K562 (cell line): ENCODE measurements at regions of chr5 and their contacts with region 1.

Region 1: DNA sequence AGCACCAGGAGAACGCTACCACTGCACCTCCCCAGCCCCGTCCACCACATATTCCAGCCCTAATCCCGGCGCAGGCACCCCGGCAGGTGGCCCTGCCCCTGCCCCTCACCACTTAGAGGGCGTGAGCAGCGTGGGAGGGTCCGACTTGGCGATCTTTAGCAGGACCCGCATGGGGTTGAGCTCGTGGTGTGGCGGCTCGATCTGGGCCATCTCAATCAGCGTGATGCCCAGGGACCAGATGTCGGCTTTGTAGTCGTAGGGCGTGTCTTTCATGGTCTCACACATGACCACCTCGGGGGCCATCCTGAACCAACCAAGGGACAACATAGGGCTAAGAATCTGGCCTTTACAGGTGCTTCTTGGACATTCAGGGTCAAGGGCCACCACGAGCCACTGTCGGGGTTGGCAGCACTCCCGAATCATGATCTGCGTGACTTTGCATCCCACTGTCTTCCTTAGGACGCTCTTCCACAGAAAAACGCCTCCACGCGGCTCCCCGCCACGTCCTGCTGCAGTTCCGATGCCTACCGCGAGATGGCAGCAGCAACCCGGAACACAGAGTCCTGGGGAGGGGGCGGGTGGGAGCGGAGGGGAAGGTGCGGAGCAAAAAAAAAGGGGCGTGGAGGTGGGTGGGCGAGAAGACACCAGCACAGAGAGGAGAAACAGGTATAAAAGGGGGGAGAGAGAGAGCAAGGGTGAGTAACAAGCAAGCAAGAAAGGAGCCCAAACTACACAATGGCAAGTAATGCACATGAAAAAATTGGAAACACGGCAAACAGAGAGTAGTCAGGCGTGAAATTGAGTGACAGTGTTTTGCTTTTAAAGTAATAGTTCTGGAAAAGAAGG is 81.3 kb downstream of the STK10 start:
- DNase-seq: peak; percentile 66 to 79 (median 75)
- ATAC-seq: peak; percentile 72
- H3K4me3 ChIP-seq: no peak overlapping the region
- H3K27ac ChIP-seq: no peak overlapping the region
- H3K4me1 ChIP-seq: peaks cover 25 to 45% of the 10 kb centered on the region in 2 experiments; a peak in 4 of 5 replicates
- H3K27me3 ChIP-seq: peaks cover 0 to 5% of the 10 kb centered on the region in 2 experiments; a peak in 1 of 5 replicates
- CTCF ChIP-seq: peak; percentile 86 to 95 (median 87)
- EP300 ChIP-seq: no peak
- POLR2A ChIP-seq: no peak
- RAD21 ChIP-seq: peak; percentile 85 to 86

Region 2: DNA sequence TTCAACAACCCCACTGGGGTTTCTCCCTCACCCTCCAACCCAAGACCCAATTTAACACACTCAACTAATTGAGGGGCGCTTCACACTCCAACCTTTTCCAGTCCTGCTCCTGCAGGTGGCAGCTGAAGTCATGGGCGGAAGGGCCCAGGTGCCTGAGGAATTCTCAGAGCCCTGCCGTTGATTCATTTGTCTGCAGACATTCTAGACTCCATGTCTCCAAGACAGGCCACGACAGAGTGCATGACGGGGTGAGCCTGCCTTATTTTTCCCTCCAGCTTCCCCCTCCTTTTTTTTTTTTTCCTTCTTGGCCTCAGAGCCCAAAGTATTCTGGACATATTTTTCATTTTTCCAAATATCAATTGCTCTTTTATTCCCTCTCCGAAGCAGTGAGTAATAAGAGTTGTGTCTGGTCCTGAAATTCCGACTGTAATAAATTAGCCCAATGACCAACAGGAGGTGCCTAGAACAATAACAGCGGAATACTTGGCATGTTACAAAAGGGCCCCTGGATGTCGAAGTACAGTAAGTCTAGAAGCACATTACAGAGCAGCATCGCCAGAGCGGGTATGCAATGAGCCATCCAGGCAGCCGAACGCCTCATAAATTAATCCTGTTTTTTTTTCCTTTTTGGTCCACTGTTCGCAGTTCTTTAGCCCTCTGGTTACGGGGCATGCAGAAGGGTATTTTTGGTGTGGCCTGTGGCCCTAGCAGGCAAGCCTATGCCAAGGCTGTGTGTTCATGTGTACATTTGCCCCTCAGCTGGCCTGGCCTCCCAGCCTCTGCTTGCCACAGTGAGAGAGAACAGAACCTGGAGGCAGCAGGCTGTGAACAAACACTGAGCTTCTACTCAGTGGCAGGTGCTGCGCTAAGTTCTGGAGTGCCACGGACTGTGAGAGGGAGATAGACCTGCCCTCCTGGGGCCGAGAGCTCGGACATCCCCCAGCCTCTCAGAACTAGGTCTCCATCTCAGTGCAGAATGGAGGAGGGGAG is 329.7 kb before region 1 on chr5:
- CTCF ChIA-PET with region 1: no interaction called
- POLR2A ChIA-PET with region 1: no interaction called
- in situ Hi-C with region 1: no loop called
- intact Hi-C with region 1: no loop called
- DNase-seq: no peak
- ATAC-seq: no peak
- H3K4me3 ChIP-seq: no peak overlapping the region
- H3K27ac ChIP-seq: no peak overlapping the region
- H3K4me1 ChIP-seq: no peaks in the 10 kb centered on the region
- H3K27me3 ChIP-seq: peaks cover 20 to 54% of the 10 kb centered on the region in 2 experiments; a peak in 3 of 5 replicates
- CTCF ChIP-seq: no peak
- EP300 ChIP-seq: no peak
- POLR2A ChIP-seq: no peak
- RAD21 ChIP-seq: no peak; a peak in 1 of 4 replicates

Region 3: DNA sequence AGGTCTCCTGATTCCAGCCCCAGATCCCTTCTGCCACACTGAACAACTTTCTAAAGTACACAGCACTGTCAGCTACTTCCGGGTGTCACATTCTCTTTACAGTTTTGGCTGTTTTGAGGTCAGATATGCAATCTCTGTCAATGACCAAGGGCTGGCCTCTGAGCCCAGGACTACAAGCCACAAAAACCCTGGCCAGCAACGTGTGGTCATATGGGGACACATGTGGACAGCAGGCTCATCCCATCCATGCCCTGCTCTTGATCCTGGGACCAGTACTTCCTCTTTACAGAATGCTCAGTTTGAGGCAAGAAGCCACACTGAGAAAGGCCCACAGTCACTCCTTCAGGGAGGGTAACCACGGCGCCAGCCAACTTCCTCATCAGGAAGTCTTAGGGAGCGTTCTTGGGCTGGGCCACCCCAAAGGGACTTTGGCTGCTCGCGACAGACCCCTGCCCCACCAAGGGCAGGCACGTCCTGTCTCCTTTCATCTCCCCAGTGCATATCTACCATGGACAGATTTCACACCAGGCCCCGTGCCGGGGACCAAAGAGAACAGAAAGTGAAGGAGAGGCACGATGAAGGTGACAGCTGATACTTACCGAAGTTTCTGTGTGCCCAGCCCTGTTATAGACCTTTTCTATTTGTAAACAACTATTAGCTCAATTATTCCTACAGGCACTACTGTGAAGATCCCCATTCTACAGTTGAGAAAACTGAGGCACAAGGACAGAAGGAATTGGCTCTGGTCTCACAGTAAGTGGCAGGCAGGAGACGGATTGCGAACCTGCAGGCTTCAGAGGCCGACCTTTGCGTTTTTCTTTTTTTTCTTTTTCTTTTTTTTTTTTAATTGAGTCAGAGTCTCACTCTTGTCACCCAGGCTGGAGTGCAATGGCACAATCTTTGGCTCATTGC is 44.0 kb after region 1 on chr5:
- CTCF ChIA-PET with region 1: no interaction called
- POLR2A ChIA-PET with region 1: no interaction called
- in situ Hi-C with region 1: no loop called
- intact Hi-C with region 1: loop called (anchors 5 kb)
- DNase-seq: peak in 3 of 4 experiments; percentile 11 to 54 (median 46)
- ATAC-seq: peak; percentile 79
- H3K4me3 ChIP-seq: no peak overlapping the region
- H3K27ac ChIP-seq: peak overlapping the region; percentile 46; the same call in 2 of the 3 replicates
- H3K4me1 ChIP-seq: peaks cover 16 to 20% of the 10 kb centered on the region in 2 experiments; a peak in 4 of 5 replicates
- H3K27me3 ChIP-seq: no peaks in the 10 kb centered on the region
- CTCF ChIP-seq: no peak
- EP300 ChIP-seq: peak; percentile 41; the same call in 1 of the 2 replicates
- POLR2A ChIP-seq: no peak
- RAD21 ChIP-seq: peak in 1 of 2 experiments; percentile 16; a peak in 1 of 4 replicates

Region 4: DNA sequence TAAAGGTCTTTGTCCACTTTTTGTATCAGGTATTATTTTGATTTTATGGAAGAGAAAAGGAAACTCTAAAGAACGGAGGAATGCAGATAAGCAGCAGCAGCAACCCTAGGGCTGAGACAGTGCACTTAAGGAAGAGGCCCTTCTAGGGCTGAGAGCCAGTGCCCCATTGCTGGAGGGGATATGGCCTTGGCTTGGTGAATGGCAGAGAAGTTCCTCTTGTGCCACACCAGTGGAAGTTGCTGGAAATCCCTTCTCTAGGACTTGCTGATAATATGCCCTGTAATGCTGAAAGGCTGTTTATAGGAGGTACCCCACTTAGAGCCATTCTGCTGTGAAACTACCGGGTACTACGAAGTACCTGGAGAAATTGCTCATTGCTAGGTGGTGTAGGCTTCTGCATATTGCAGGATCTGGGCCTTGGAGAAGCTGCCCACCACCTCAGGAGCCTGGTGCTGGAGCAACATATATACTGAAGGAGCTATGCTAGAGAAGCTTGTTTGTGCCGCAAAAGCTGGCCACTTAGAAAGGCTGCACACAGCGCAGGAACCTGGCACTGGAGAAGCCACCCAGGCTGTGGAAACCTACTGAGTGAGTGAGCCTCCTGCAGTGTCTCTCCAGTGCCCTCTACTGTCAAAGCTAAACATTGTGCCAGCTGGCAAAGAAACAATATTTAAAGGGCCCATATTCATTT is 186.5 kb after region 1 on chr5:
- CTCF ChIA-PET with region 1: no interaction called
- POLR2A ChIA-PET with region 1: no interaction called
- in situ Hi-C with region 1: no loop called
- intact Hi-C with region 1: loop called (anchors 1 kb)
- DNase-seq: peak; percentile 19 to 56 (median 26)
- ATAC-seq: peak; percentile 94
- H3K4me3 ChIP-seq: no peak overlapping the region
- H3K27ac ChIP-seq: no peak overlapping the region
- H3K4me1 ChIP-seq: no peaks in the 10 kb centered on the region
- H3K27me3 ChIP-seq: peaks cover 3 to 24% of the 10 kb centered on the region in 2 experiments
- CTCF ChIP-seq: peak; percentile 73 to 78 (median 78)
- EP300 ChIP-seq: no peak
- POLR2A ChIP-seq: no peak
- RAD21 ChIP-seq: peak; percentile 71 to 81

Region 5: DNA sequence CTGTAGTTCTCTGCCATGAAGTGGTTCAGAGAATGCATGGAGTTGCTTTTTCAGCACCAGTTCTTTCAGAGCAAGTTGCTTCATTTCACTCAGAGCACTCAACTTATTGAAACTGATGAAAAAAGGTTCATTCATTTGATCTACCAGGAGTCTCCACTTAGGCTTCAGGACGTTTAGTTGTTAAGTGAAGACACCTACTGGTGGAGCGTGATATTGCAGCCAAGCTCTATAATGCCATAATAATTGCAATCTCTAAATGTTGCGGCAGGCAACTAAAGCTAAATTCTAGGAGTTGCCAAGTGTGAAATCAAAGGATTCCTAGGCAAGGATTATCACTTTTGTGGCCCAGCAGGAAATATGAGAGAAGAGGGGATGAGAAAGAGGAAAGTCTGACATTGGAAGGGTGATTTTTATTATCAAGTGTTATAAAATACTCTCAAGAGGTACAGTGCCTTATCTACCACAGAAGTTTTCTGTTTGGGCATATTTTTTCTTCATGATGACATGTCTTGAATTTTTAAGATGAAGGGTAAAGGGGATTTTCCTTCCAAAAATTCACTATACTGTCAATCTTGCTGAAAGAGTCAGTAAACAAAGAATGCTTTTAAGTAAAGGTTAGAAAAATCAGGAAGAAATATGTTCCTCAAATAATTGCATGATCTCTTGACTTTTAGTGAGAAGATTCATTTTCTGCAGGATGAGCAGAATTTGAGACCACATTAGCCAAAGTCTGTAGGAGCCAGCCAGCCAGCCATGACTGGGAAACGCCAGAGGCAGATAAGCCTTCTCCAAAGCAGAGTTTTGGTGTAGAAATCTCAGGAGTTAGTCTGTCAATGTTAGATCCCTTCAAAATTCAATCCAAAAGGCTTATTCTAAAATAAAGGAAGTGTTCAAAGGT is 264.2 kb after region 1 on chr5:
- CTCF ChIA-PET with region 1: no interaction called
- POLR2A ChIA-PET with region 1: no interaction called
- in situ Hi-C with region 1: loop called (anchors 10 kb)
- intact Hi-C with region 1: loop called (anchors 5 kb)
- DNase-seq: peak; percentile 27 to 56 (median 36)
- ATAC-seq: no peak
- H3K4me3 ChIP-seq: no peak overlapping the region
- H3K27ac ChIP-seq: no peak overlapping the region
- H3K4me1 ChIP-seq: no peaks in the 10 kb centered on the region
- H3K27me3 ChIP-seq: no peaks in the 10 kb centered on the region; a peak in 1 of 5 replicates
- CTCF ChIP-seq: peak in 2 of 3 experiments; percentile 74 to 76; a peak in 5 of 6 replicates
- EP300 ChIP-seq: no peak
- POLR2A ChIP-seq: no peak
- RAD21 ChIP-seq: peak; percentile 62 to 77

Region 6: GRCh38 chr5:172697123-172698121 is 590.7 kb after region 1 on chr5:
- CTCF ChIA-PET with region 1: no interaction called
- POLR2A ChIA-PET with region 1: no interaction called
- in situ Hi-C with region 1: no loop called
- intact Hi-C with region 1: loop called (anchors 5 kb)
- DNase-seq: peak; percentile 78 to 84 (median 81)
- ATAC-seq: peak; percentile 92
- H3K4me3 ChIP-seq: 0 out of 2 replicates have a peak overlapping the region, but pooled peaks have one; percentile 5
- H3K27ac ChIP-seq: no peak overlapping the region
- H3K4me1 ChIP-seq: peaks cover 0 to 12% of the 10 kb centered on the region in 2 experiments; a peak in 3 of 5 replicates
- H3K27me3 ChIP-seq: peaks cover 41 to 77% of the 10 kb centered on the region in 2 experiments
- CTCF ChIP-seq: peak; percentile 88 to 96 (median 93)
- EP300 ChIP-seq: no peak
- POLR2A ChIP-seq: no peak
- RAD21 ChIP-seq: peak; percentile 91 to 94